GM12878 (cell line): ENCODE measurements at regions of chr2 and their contacts with region 1.

Region 1: DNA sequence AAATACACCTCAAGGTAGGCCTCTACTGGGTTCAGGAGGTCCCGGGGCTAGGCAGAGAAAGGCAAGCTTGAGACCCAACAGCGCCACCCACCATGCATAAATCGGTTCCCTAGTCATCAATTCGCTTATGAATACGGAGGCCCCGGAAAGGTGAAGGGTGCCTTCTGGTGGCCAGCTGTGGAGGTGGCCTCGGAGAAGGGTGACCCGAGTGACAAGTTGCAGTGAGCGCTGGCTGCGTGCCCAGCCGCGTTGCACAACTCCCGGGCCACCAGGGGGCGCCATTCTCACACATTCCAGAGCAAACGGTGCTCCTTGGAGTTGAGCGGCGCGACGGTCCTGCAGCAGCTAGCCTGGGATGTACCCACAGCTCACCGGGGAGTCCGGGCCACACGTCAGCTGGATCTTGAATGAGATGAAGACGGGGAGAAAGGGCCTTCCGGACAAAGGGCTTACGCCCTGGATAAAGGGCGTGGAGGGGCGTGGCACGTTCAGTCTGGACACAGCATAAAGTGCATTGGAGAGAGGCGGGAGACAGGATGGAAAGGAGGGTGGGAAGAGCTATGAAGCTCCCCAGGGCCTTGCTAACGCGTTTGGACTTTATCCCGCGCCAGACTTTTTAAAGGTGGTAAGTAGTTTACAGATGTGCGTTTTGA is 20.4 kb downstream of the TMSB10 start:
- DNase-seq: peak; percentile 92
- ATAC-seq: peak; percentile 82
- H3K4me3 ChIP-seq: peak overlapping the region; percentile 71
- H3K27ac ChIP-seq: peak overlapping the region; percentile 80
- H3K4me1 ChIP-seq: peaks cover 25% of the 10 kb centered on the region
- H3K27me3 ChIP-seq: no peaks in the 10 kb centered on the region
- CTCF ChIP-seq: peak; percentile 97 to 100 (median 100); a peak in 5 of 6 replicates
- EP300 ChIP-seq: no peak
- POLR2A ChIP-seq: peak; percentile 70
- RAD21 ChIP-seq: peak; percentile 89

Region 2: GRCh38 chr2:84495539-84496146 is 430.2 kb before region 1 on chr2:
- CTCF ChIA-PET with region 1: interaction called, 25 read pairs
- POLR2A ChIA-PET with region 1: no interaction called
- RAD21 ChIA-PET with region 1: interaction called, 14 read pairs
- SMC1A ChIA-PET with region 1: interaction called, 13 read pairs
- in situ Hi-C with region 1: loop called (anchors 5 kb)
- intact Hi-C with region 1: loop called (anchors 1 kb)
- DNase-seq: no peak
- ATAC-seq: peak; percentile 93
- H3K4me3 ChIP-seq: no peak overlapping the region
- H3K27ac ChIP-seq: no peak overlapping the region
- H3K4me1 ChIP-seq: no peaks in the 10 kb centered on the region
- H3K27me3 ChIP-seq: no peaks in the 10 kb centered on the region
- CTCF ChIP-seq: peak; percentile 41 to 80 (median 53); a peak in 5 of 6 replicates
- EP300 ChIP-seq: no peak
- POLR2A ChIP-seq: no peak
- RAD21 ChIP-seq: peak; percentile 93

Region 3: DNA sequence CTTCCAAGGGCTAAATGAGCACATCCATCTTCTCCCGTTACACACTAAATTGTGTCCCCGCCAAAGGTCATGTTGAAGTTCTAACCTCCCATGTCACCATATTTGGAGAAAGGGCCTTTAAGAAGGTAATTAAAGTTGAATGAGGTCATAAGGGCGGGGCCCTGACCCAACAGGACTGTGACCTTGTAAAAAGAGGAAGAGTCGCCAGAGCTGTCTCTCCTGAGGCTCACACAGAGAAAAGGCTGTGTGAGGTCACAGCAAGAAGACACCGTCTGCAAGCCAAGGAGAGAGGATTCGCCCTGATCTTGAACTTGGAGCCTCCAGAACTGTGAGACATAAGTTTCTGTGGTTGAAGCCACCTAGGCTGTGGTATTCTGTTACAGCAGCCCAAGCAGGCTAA is 69.1 kb before region 1 on chr2:
- CTCF ChIA-PET with region 1: interaction called, 30 read pairs
- POLR2A ChIA-PET with region 1: no interaction called
- RAD21 ChIA-PET with region 1: interaction called, 13 read pairs
- SMC1A ChIA-PET with region 1: interaction called, 12 read pairs
- in situ Hi-C with region 1: no loop called
- intact Hi-C with region 1: no loop called
- DNase-seq: no peak
- ATAC-seq: peak; percentile 94
- H3K4me3 ChIP-seq: no peak overlapping the region
- H3K27ac ChIP-seq: no peak overlapping the region
- H3K4me1 ChIP-seq: no peaks in the 10 kb centered on the region
- H3K27me3 ChIP-seq: no peaks in the 10 kb centered on the region
- CTCF ChIP-seq: no peak
- EP300 ChIP-seq: no peak
- POLR2A ChIP-seq: no peak
- RAD21 ChIP-seq: no peak

Region 4: GRCh38 chr2:84888401-84889276 is 37.2 kb before region 1 on chr2:
- CTCF ChIA-PET with region 1: interaction called, 133 read pairs
- POLR2A ChIA-PET with region 1: interaction called, 10 read pairs
- RAD21 ChIA-PET with region 1: interaction called, 74 read pairs
- SMC1A ChIA-PET with region 1: interaction called, 83 read pairs
- in situ Hi-C with region 1: no loop called
- intact Hi-C with region 1: no loop called
- DNase-seq: peak; percentile 70
- ATAC-seq: peak; percentile 99
- H3K4me3 ChIP-seq: peak overlapping the region; percentile 54
- H3K27ac ChIP-seq: peak overlapping the region; percentile 85
- H3K4me1 ChIP-seq: peaks cover 13% of the 10 kb centered on the region
- H3K27me3 ChIP-seq: no peaks in the 10 kb centered on the region
- CTCF ChIP-seq: no peak
- EP300 ChIP-seq: peak in 1 of 2 experiments; percentile 61; a peak in 1 of 4 replicates
- POLR2A ChIP-seq: 0 out of 2 replicates have a peak, but pooled peaks have one; percentile 37
- RAD21 ChIP-seq: no peak

Region 5: DNA sequence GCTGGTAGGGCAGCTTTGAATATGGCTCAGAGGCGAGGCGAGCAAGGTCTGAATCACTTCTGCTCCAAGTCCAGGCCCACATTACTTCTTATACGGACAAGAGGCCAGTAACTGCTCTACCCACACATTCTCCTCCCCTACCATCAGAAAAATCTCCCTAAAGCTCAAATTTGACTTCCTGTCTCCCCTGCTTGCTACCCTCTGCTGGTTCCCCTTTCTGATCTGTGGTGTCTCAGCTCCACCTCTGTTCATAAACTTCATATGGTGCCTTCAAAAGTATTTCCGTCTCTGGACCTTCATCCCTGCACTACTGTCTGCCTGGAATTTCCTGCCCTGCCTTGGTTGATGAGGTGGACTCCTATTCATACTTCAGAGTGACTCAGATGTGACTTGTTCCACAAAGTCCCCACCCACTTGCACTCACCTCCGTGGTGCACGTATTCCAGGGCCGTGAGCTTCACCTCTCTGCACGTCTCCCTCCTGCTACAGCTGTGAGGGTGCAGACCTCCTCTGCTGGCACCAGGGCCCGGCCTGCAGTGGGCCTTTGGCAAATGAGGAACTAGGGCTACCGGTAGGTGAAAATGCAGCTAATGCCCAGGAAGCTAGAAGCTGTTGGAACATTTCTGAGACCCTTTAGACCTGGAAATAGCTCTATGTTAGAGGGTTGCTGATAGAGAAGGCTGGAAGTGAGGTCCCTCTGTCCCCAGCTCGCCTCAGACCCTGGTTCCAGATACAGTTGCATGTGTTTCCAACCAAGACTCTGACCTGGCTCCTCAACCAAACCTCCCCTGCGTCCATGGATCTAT is 20.6 kb after region 1 on chr2:
- CTCF ChIA-PET with region 1: interaction called, 275 read pairs
- POLR2A ChIA-PET with region 1: interaction called, 79 read pairs
- RAD21 ChIA-PET with region 1: interaction called, 160 read pairs
- SMC1A ChIA-PET with region 1: interaction called, 190 read pairs
- in situ Hi-C with region 1: no loop called
- intact Hi-C with region 1: loop called (anchors 1 kb)
- DNase-seq: peak; percentile 93
- ATAC-seq: peak; percentile 72
- H3K4me3 ChIP-seq: peak overlapping the region; percentile 62
- H3K27ac ChIP-seq: peak overlapping the region; percentile 100
- H3K4me1 ChIP-seq: peaks cover 31% of the 10 kb centered on the region
- H3K27me3 ChIP-seq: no peaks in the 10 kb centered on the region
- CTCF ChIP-seq: peak in 2 of 3 experiments; percentile 31 to 39; a peak in 3 of 6 replicates
- EP300 ChIP-seq: peak; percentile 8 to 45; a peak in 1 of 4 replicates
- POLR2A ChIP-seq: peak; percentile 75
- RAD21 ChIP-seq: peak; percentile 54

Region 6: GRCh38 chr2:85011747-85012146 is 85.9 kb after region 1 on chr2:
- CTCF ChIA-PET with region 1: interaction called, 14 read pairs
- POLR2A ChIA-PET with region 1: interaction called, 5 read pairs
- RAD21 ChIA-PET with region 1: interaction called, 52 read pairs
- SMC1A ChIA-PET with region 1: interaction called, 36 read pairs
- in situ Hi-C with region 1: loop called (anchors 5 kb)
- intact Hi-C with region 1: loop called (anchors 1 kb)
- DNase-seq: no peak
- ATAC-seq: peak; percentile 29; the same call in 2 of the 3 replicates
- H3K4me3 ChIP-seq: no peak overlapping the region
- H3K27ac ChIP-seq: no peak overlapping the region
- H3K4me1 ChIP-seq: peaks cover 32% of the 10 kb centered on the region
- H3K27me3 ChIP-seq: no peaks in the 10 kb centered on the region
- CTCF ChIP-seq: peak in 1 of 3 experiments; percentile 9; a peak in 2 of 6 replicates
- EP300 ChIP-seq: no peak
- POLR2A ChIP-seq: no peak
- RAD21 ChIP-seq: no peak

Region 7: DNA sequence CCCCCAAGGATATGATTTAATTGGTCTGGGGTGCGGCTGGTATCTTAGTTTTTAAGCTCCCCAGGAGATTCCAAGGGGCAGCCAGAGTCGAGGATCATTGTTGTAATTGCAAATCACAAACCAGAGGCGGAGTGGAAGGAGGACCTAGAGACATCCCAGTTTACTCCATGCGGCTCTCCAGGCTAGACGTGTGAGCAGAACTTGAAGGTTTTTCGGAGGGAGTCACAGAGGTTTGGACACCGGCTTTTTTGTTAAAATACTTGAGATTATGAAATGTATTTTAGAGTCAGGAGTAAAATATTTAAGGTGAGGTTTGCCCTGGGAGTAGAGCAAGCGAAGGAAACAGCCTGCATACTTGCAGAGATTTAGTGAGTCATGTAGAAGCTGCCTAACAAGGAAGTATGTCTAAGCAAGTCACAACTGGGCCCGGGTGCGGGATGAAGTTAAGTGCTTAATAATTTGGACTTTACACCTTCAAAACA is 362.4 kb after region 1 on chr2:
- CTCF ChIA-PET with region 1: interaction called, 39 read pairs
- POLR2A ChIA-PET with region 1: interaction called, 3 read pairs
- RAD21 ChIA-PET with region 1: interaction called, 6 read pairs
- SMC1A ChIA-PET with region 1: interaction called, 8 read pairs
- in situ Hi-C with region 1: loop called (anchors 5 kb)
- intact Hi-C with region 1: loop called (anchors 2 kb)
- DNase-seq: no peak
- ATAC-seq: no peak
- H3K4me3 ChIP-seq: no peak overlapping the region
- H3K27ac ChIP-seq: no peak overlapping the region
- H3K4me1 ChIP-seq: no peaks in the 10 kb centered on the region; the same call in 1 of the 2 replicates
- H3K27me3 ChIP-seq: no peaks in the 10 kb centered on the region; a peak in 1 of 4 replicates
- CTCF ChIP-seq: no peak
- EP300 ChIP-seq: no peak
- POLR2A ChIP-seq: no peak
- RAD21 ChIP-seq: no peak

Region 8: GRCh38 chr2:85347599-85347998 is 421.7 kb after region 1 on chr2:
- CTCF ChIA-PET with region 1: no interaction called
- POLR2A ChIA-PET with region 1: no interaction called
- RAD21 ChIA-PET with region 1: no interaction called
- SMC1A ChIA-PET with region 1: no interaction called
- in situ Hi-C with region 1: no loop called
- intact Hi-C with region 1: no loop called
- DNase-seq: no peak
- ATAC-seq: no peak
- H3K4me3 ChIP-seq: no peak overlapping the region
- H3K27ac ChIP-seq: no peak overlapping the region
- H3K4me1 ChIP-seq: no peaks in the 10 kb centered on the region
- H3K27me3 ChIP-seq: no peaks in the 10 kb centered on the region
- CTCF ChIP-seq: no peak
- EP300 ChIP-seq: no peak
- POLR2A ChIP-seq: no peak
- RAD21 ChIP-seq: no peak

Region 9: DNA sequence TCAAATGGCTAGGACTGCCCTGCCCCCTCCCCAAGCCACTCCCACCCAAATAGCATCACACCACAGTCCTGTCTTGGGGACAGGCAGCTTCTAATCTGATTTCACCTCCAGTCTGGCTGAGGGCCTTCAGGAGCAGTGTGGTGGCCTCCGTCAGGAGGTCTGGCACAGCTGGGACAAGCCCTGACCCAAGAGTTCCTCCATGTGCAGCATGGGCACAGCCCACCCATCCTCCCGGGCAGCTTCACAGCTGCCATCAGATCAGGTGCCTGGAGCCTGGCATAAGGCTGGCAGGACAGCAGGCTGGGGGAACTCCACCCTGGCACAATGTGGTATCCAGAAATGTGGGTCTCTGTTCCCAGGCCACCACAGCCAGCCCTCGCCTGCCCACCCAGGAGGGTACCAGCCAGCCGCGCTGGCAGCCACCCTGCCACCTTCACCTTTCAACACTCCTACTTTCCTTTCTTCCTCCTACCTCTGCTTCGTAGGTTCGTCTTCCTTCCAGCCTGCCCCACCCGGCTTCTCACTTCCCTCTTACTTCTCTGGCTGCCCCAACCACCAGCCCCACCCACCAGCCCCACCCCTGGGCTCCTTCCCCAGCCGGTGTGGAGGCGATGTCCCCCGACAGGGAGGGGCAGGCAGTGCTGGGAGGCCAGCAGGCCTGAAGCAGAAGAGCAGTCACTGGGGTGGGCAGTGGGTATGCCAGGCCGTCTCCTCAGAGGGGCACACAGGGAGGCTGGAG is 484.2 kb after region 1 on chr2 and contains the start of gene CAPG:
- CTCF ChIA-PET with region 1: no interaction called
- POLR2A ChIA-PET with region 1: no interaction called
- RAD21 ChIA-PET with region 1: no interaction called
- SMC1A ChIA-PET with region 1: no interaction called
- in situ Hi-C with region 1: no loop called
- intact Hi-C with region 1: no loop called
- DNase-seq: no peak
- ATAC-seq: peak; percentile 90
- H3K4me3 ChIP-seq: peak within 1 kb of the TSS; percentile 64; the same call in 1 of the 2 replicates
- H3K27ac ChIP-seq: peak within 1 kb of the TSS; percentile 55
- H3K4me1 ChIP-seq: peaks cover 26% of the 10 kb centered on the region
- H3K27me3 ChIP-seq: no peaks in the 10 kb centered on the region
- CTCF ChIP-seq: no peak
- EP300 ChIP-seq: no peak
- POLR2A ChIP-seq: no peak
- RAD21 ChIP-seq: no peak
- polyA plus RNA-seq, gene CAPG: 26.3 to 65.6 TPM